H1 (cell line): ENCODE measurements at regions of chr15 and their contacts with region 1.

Region 1: DNA sequence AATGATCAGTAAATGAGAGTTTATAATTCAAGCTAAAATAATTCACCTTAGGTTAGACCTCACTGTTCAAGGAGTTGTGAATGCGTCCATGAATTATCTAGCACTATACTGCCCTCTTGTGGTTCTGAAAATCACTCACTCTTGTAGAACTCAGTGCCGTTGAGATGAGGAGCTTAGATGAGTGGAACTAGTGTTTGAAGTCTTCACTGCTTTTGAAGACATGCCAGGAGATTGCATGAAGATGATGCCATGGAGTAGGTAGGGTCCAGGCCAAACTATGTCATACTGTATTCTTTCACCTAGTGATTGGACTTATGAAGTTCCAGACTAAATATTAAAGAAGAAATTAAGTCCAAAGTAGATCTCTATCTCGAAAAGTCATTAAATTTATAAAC is 28.8 kb downstream of the LYSMD4 start:
- DNase-seq: no peak
- H3K4me3 ChIP-seq: no peak overlapping the region
- H3K27ac ChIP-seq: no peak overlapping the region
- H3K4me1 ChIP-seq: no peaks in the 10 kb centered on the region; a peak in 1 of 7 replicates
- H3K27me3 ChIP-seq: no peaks in the 10 kb centered on the region
- CTCF ChIP-seq: peak in 2 of 3 experiments; percentile 69 to 77; a peak in 3 of 4 replicates
- EP300 ChIP-seq: no peak
- POLR2A ChIP-seq: no peak
- RAD21 ChIP-seq: peak; percentile 86 to 87

Region 2: GRCh38 chr15:99275525-99276128 is 428.8 kb before region 1 on chr15:
- CTCF ChIA-PET with region 1: interaction called, 52 read pairs
- POLR2A ChIA-PET with region 1: no interaction called
- DNase-seq: no peak
- H3K4me3 ChIP-seq: no peak overlapping the region
- H3K27ac ChIP-seq: no peak overlapping the region
- H3K4me1 ChIP-seq: peaks cover 0 to 6% (median 3%) of the 10 kb centered on the region in 4 experiments; a peak in 2 of 7 replicates
- H3K27me3 ChIP-seq: no peaks in the 10 kb centered on the region
- CTCF ChIP-seq: no peak
- EP300 ChIP-seq: no peak
- POLR2A ChIP-seq: no peak
- RAD21 ChIP-seq: no peak

Region 3: DNA sequence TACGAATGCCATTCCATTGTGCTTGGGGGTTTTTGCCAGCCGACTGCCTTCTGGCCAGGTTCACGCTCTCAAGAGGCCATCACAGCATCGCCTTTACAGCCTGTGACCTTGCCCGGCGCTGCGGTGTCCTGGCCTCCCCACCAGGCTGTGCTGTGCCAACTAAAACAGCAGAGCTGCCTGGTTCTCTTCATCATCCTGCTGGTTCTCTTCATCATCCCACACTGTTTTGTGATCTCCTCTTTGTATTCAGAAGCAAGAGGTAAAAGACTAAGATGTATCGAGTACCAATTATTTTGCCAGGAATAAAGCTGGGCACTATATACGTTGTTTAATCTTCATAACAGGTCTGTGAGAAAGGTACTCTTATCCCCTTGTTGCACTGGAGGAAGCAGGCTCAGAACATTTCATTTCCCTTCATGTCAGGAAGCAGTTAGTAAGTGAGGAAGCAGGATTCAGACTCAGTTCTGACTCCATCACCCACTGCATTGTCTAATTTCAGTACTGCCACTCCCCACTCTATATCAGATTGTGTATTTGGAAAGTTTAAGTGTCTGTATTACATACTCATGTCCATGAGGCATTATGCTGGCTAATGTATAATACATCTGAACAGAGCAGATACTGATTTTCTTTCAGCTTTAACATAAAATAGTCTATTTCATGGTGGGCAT is 360.4 kb before region 1 on chr15:
- CTCF ChIA-PET with region 1: interaction called, 10 read pairs
- POLR2A ChIA-PET with region 1: no interaction called
- DNase-seq: peak; percentile 21 to 65
- H3K4me3 ChIP-seq: no peak overlapping the region
- H3K27ac ChIP-seq: no peak overlapping the region
- H3K4me1 ChIP-seq: no peaks in the 10 kb centered on the region
- H3K27me3 ChIP-seq: no peaks in the 10 kb centered on the region
- CTCF ChIP-seq: peak; percentile 72 to 91 (median 91)
- EP300 ChIP-seq: no peak
- POLR2A ChIP-seq: no peak
- RAD21 ChIP-seq: peak; percentile 70 to 77

Region 4: DNA sequence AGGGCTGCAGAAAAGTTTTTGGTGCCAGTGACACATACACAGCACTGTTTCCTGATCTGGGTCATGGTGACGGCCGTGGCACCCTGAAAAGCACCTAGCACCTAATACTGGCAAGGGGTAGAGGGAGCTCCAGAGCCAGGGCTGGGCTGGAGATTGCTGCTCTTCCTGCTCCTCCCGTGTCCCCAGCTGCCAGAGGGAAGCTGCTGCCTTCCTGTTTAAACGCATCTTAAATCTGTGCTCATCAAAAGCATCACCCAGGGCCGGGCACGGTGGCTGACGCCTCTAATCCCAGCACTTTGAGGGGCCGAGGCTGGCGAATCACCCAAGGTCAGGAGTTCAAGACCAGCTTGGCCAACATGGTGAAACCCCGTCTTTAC is 295.4 kb before region 1 on chr15:
- CTCF ChIA-PET with region 1: interaction called, 53 read pairs
- POLR2A ChIA-PET with region 1: interaction called, 3 read pairs
- DNase-seq: peak; percentile 49 to 58
- H3K4me3 ChIP-seq: no peak overlapping the region
- H3K27ac ChIP-seq: no peak overlapping the region
- H3K4me1 ChIP-seq: 0 out of 7 replicates have a peak, but pooled peaks cover 0 to 3% (median 0%) of the 10 kb centered on the region in 4 experiments
- H3K27me3 ChIP-seq: no peaks in the 10 kb centered on the region
- CTCF ChIP-seq: peak; percentile 69 to 80 (median 78)
- EP300 ChIP-seq: no peak
- POLR2A ChIP-seq: no peak
- RAD21 ChIP-seq: peak; percentile 85 to 88

Region 5: GRCh38 chr15:99582508-99582960 is 121.9 kb before region 1 on chr15:
- CTCF ChIA-PET with region 1: interaction called, 17 read pairs
- POLR2A ChIA-PET with region 1: no interaction called
- DNase-seq: no peak
- H3K4me3 ChIP-seq: no peak overlapping the region
- H3K27ac ChIP-seq: no peak overlapping the region
- H3K4me1 ChIP-seq: peaks cover 2 to 23% (median 14%) of the 10 kb centered on the region in 4 experiments; a peak in 6 of 7 replicates
- H3K27me3 ChIP-seq: no peaks in the 10 kb centered on the region
- CTCF ChIP-seq: no peak
- EP300 ChIP-seq: no peak
- POLR2A ChIP-seq: no peak
- RAD21 ChIP-seq: no peak

Region 6: GRCh38 chr15:99719096-99719541 is 14.7 kb after region 1 on chr15:
- CTCF ChIA-PET with region 1: interaction called, 51 read pairs
- POLR2A ChIA-PET with region 1: interaction called, 3 read pairs
- DNase-seq: no peak
- H3K4me3 ChIP-seq: no peak overlapping the region
- H3K27ac ChIP-seq: no peak overlapping the region
- H3K4me1 ChIP-seq: peaks cover 0 to 2% (median 0%) of the 10 kb centered on the region in 4 experiments; a peak in 1 of 7 replicates
- H3K27me3 ChIP-seq: no peaks in the 10 kb centered on the region
- CTCF ChIP-seq: no peak
- EP300 ChIP-seq: no peak
- POLR2A ChIP-seq: no peak
- RAD21 ChIP-seq: no peak

Region 7: GRCh38 chr15:99755692-99756409 is 51.4 kb after region 1 on chr15:
- CTCF ChIA-PET with region 1: interaction called, 50 read pairs
- POLR2A ChIA-PET with region 1: no interaction called
- DNase-seq: peak in 1 of 2 experiments; percentile 49
- H3K4me3 ChIP-seq: no peak overlapping the region
- H3K27ac ChIP-seq: no peak overlapping the region
- H3K4me1 ChIP-seq: no peaks in the 10 kb centered on the region
- H3K27me3 ChIP-seq: peaks cover 0 to 10% (median 0%) of the 10 kb centered on the region in 4 experiments; a peak in 2 of 7 replicates
- CTCF ChIP-seq: peak; percentile 30 to 74 (median 71)
- EP300 ChIP-seq: no peak
- POLR2A ChIP-seq: no peak
- RAD21 ChIP-seq: peak; percentile 85 to 87